Naive thymus-derived CD8-positive, alpha-beta T cell (primary cell): ENCODE measurements at regions of chr10 and their contacts with region 1.

Region 1: DNA sequence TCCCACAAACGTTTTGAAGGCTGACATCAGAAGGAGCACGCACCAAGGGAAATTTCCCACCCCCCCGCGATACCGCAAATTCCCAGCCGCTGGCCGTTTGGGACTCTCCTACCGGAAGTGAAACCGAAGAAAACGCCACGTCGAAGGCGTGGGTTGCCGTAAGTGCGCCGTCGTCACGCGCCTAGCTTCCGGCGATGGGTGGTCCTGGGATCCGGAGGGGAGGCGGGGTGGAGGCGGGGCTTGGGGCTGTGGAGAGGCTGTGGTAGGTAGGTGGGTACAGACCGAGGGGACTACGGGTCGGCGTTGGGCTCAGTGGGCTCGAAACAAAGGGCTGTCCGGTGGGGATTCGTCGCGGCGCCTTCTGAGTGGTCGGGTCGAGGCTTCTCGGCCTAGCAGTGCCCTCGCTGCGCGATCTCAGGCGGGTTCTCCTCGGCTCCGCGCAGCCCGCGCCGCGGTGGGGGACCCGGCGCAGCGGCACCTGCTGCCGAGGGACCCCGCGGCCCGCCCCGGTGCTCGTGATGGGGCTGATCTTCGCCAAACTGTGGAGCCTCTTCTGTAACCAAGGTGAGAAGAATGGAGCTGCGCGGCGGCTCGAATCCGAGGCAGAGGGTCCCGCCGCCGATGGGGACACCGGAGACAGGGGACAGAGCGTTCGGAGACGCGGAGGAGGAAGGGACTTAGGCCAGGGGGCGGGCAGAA is at the start of gene ARL5B:
- DNase-seq: peak; percentile 91 to 98 (median 94)
- ATAC-seq: peak; percentile 94 to 95
- H3K4me3 Mint-ChIP-seq: peak within 1 kb of the TSS; percentile 98 to 100 (median 99)
- H3K27ac Mint-ChIP-seq: peak within 1 kb of the TSS; percentile 95 to 99 (median 99)
- H3K4me1 Mint-ChIP-seq: peaks cover 18 to 64% (median 46%) of the 10 kb centered on the region in 4 donors
- H3K27me3 Mint-ChIP-seq: no peaks in the 10 kb centered on the region
- polyA plus RNA-seq, gene ARL5B: 0.72 to 1.9 (median 0.97) TPM

Region 2: GRCh38 chr10:18625886-18626285 is 33.4 kb before region 1 on chr10:
- POLR2A ChIA-PET with region 1: interaction called, 12 read pairs
- DNase-seq: no peak
- ATAC-seq: no peak
- H3K4me3 Mint-ChIP-seq: peak overlapping the region in 4 of 10 donors; percentile 34 to 92 (median 62)
- H3K27ac Mint-ChIP-seq: peak overlapping the region in 7 of 10 donors; percentile 1 to 93 (median 44)
- H3K4me1 Mint-ChIP-seq: peaks cover 7 to 25% (median 17%) of the 10 kb centered on the region in 4 donors
- H3K27me3 Mint-ChIP-seq: no peaks in the 10 kb centered on the region

Region 3: GRCh38 chr10:18699849-18700840 is 40.9 kb after region 1 on chr10:
- POLR2A ChIA-PET with region 1: no interaction called
- DNase-seq: no peak
- ATAC-seq: no peak
- H3K4me3 Mint-ChIP-seq: no peak overlapping the region
- H3K27ac Mint-ChIP-seq: peak overlapping the region in 1 of 10 donors; percentile 12
- H3K4me1 Mint-ChIP-seq: peaks cover 0 to 3% (median under 1%) of the 10 kb centered on the region in 4 donors
- H3K27me3 Mint-ChIP-seq: peaks cover 0 to 1% (median 0%) of the 10 kb centered on the region in 5 donors